Activated T-helper 1 cell treated with anti-CD3 and anti-CD28 coated beads, Interleukin-12 subunit alpha, Interleukin-12 subunit beta, Interleukin-2, Interleukin-4 antibody, amounts not matched to agents 30 ng/mL and 10 ng/mL and 1 ng/mL, durations not matched to agents 14 hours and 24 hours and 36 hours (primary cell): ENCODE measurements at regions of chr16 and their contacts with region 1.

Region 1: GRCh38 chr16:636206-637080 is at the start of gene METTL26:
- DNase-seq: peak; percentile 91
- H3K4me3 Mint-ChIP-seq: peak within 1 kb of the TSS; percentile 85
- H3K27ac Mint-ChIP-seq: peak within 1 kb of the TSS; percentile 91
- H3K4me1 Mint-ChIP-seq: peaks cover 6% of the 10 kb centered on the region
- H3K27me3 Mint-ChIP-seq: no peaks in the 10 kb centered on the region
- total RNA-seq, gene METTL26: 141 and 147 TPM in 2 replicates

Region 2: GRCh38 chr16:401468-402348 is 234.7 kb before region 1 on chr16 and contains the start of gene DECR2:
- intact Hi-C with region 1: loop called (anchors 2 kb)
- DNase-seq: peak; percentile 90
- H3K4me3 Mint-ChIP-seq: peak within 1 kb of the TSS; percentile 87
- H3K27ac Mint-ChIP-seq: peak within 1 kb of the TSS; percentile 58
- H3K4me1 Mint-ChIP-seq: peaks cover 11% of the 10 kb centered on the region
- H3K27me3 Mint-ChIP-seq: peaks cover 2% of the 10 kb centered on the region
- total RNA-seq, gene DECR2: 18.0 and 20.1 TPM in 2 replicates

Region 3: DNA sequence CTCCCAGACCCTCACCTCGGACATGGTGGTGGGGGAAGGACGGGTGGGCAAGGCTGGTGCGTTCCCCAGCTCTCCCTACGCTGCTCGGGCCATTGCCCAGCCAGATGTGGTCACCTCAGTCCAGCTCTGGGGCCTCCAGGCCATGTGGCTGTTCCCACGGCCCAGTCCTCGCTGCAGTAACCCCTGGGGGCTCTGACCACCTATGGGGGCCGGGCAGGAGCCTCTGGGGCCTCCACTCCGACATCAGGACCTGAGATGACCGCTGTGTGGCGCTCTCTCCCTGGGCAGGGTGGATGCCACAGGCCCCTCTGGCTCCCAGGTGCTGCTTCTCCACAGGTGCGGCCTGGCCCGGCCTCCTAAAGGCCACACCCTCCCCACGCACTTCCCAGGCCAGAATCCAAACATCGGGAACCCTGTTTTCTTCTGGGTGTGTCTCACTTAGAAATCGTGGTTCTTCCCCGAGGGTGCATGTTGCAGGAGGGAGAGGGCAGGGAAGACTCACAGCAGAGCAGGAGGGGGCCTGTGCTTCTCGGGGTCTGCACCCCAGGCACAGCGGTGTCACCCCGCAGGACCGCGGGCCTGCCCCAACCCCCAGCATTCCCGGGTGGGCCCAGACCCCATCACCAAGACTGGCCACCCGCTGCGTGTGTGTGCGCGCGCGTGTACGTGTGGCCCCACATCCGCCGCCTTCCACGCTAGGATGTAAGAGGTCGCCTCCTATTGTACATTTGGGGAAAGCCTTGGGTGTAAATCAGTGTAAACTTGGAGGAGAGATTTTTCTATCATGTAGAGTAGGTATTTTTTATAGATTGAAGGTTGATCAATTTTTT is 114.8 kb before region 1 on chr16:
- intact Hi-C with region 1: no loop called
- DNase-seq: no peak
- H3K4me3 Mint-ChIP-seq: no peak overlapping the region
- H3K27ac Mint-ChIP-seq: no peak overlapping the region
- H3K4me1 Mint-ChIP-seq: peaks cover 9% of the 10 kb centered on the region
- H3K27me3 Mint-ChIP-seq: no peaks in the 10 kb centered on the region

Region 4: GRCh38 chr16:569445-570254 is 66.8 kb before region 1 on chr16 and contains the start of gene PIGQ:
- intact Hi-C with region 1: loop called (anchors 2 kb)
- DNase-seq: peak; percentile 65
- H3K4me3 Mint-ChIP-seq: peak within 1 kb of the TSS; percentile 85
- H3K27ac Mint-ChIP-seq: peak within 1 kb of the TSS; percentile 89
- H3K4me1 Mint-ChIP-seq: peaks cover 32% of the 10 kb centered on the region
- H3K27me3 Mint-ChIP-seq: no peaks in the 10 kb centered on the region
- total RNA-seq, gene PIGQ: 50.1 and 52.6 TPM in 2 replicates

Region 5: DNA sequence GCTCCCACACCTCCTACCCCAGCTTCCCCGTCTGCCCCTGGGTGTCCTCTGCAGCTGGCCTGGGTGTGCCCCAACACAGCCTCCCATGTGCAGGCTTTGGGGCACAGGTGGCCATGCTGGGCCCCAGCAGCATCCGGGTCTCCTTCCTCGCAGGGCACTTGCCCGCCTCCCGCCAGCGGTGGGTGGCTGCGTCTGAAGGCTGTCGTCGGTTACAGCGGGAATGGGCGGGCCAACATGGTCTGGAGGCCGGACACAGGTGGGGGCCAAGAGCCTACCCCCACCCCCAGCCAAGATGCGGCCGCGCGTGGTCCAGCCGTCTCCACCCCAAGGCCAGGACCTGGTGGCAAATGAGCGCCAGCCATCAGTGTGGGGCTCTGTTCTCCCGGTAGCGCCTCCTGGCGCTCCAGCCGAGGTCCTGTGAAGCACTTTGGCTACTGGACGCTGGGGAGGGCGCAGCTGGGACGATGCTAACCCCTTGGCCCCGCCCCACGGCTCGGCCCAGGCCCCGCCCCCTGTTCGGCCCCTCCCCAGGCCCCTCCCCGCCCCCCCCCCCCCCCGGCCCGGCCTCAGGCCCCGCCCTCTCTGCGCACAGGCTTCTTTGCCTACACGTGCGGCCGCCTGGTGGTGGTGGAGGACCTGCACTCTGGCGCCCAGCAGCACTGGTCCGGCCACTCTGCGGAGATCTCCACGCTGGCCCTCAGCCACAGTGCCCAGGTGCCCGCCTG is 24.2 kb after region 1 on chr16:
- intact Hi-C with region 1: loop called (anchors 1 kb)
- DNase-seq: peak; percentile 53
- H3K4me3 Mint-ChIP-seq: peak overlapping the region; percentile 5
- H3K27ac Mint-ChIP-seq: no peak overlapping the region
- H3K4me1 Mint-ChIP-seq: no peaks in the 10 kb centered on the region
- H3K27me3 Mint-ChIP-seq: no peaks in the 10 kb centered on the region

Region 6: DNA sequence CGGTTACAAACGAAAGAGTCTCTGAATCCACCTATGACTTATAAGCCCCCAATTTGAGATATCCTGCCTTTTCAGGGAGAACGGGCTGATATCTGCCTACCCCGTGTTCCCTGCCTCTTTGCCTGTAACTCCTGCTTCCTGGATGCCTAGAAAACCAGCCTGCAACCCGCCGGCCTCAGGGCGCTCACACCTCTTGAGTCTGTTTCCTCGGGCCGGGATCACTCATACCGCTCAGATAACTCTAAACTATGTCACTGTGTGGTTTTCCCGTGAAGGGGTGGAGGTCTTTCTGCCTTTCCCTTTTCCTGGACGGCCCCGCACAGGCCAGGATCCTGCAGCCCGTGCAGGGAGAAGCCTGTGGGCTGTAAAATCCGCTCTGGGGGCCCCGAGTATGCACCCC is 141.4 kb after region 1 on chr16:
- intact Hi-C with region 1: no loop called
- DNase-seq: no peak
- H3K4me3 Mint-ChIP-seq: no peak overlapping the region
- H3K27ac Mint-ChIP-seq: no peak overlapping the region
- H3K4me1 Mint-ChIP-seq: no peaks in the 10 kb centered on the region
- H3K27me3 Mint-ChIP-seq: no peaks in the 10 kb centered on the region

Region 7: DNA sequence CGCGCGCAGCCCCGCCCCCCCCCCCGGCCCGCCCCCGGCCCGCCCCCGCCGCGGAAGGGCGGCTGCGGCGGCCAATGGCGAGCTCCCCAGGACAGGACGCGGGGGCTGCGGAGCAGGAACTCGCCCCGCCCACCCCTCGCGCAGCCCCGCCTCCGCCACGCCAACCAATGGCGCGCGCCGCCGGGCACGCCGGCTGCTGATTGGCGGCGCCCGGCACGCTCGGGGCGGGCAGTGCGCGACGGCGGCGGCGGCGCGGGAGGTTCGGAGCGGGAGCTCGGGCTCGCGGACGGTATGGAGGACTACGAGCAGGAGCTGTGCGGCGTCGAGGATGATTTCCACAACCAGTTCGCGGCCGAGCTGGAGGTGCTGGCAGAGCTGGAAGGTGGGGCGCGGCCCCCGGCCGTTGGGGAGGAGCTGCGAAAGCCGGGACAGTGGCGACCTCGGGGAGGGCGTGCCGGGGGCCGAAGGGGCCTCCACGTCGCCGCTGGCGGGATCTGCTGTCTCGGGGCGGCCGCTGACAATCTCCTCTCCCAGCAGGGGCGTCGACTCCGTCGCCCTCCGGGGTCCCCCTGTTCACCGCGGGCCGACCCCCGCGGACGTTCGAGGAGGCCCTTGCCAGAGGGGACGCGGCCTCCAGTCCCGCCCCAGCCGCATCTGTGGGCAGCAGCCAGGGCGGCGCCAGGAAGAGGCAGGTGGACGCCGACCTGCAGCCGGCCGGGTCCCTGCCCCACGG is 152.1 kb after region 1 on chr16 and contains the start of gene CHTF18:
- intact Hi-C with region 1: loop called (anchors 5 kb)
- DNase-seq: peak; percentile 92
- H3K4me3 Mint-ChIP-seq: peak within 1 kb of the TSS; percentile 92
- H3K27ac Mint-ChIP-seq: peak within 1 kb of the TSS; percentile 79
- H3K4me1 Mint-ChIP-seq: no peaks in the 10 kb centered on the region
- H3K27me3 Mint-ChIP-seq: no peaks in the 10 kb centered on the region
- total RNA-seq, gene CHTF18: 142 and 154 TPM in 2 replicates

Region 8: DNA sequence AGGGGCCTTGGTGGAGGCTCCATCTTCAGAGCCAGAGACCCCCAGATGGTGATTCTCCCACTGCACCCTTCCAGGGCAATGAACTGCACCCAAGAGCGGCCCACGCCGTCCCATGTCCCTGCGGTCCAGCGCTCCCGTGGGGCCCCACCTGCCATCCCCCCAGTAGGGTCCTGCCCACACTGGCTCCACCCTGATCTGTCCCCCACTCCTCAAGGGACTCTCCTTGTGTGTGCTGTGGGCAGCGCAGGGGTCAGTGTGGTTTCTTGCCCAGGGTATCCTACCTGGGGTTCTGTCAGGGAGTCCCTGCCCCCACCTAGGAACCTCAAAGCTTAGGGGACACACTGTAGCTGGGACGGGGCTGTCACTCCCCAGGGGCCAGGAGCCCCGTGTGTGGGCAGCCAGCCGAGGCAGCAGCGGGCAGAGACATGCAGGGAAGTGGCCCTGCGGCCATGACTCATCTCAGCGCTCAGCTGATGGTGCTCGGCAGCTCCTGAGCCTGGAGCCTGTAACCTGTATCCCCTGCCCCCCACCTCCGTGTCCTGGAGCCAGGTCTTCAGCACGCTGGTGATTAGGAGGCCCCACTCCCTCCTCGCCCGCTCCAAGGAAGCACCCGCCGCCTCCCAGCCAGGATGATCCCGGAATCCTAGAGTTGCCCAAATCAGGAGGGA is 400.4 kb after region 1 on chr16:
- intact Hi-C with region 1: no loop called
- DNase-seq: no peak
- H3K4me3 Mint-ChIP-seq: no peak overlapping the region
- H3K27ac Mint-ChIP-seq: no peak overlapping the region
- H3K4me1 Mint-ChIP-seq: no peaks in the 10 kb centered on the region
- H3K27me3 Mint-ChIP-seq: no peaks in the 10 kb centered on the region